Gastrocnemius medialis (tissue), 4 donors: ENCODE measurements at regions of chr17 and their contacts with region 1.

Region 1: GRCh38 chr17:68019675-68020408 is 15.7 kb upstream of the KPNA2 start:
- DNase-seq: peak; percentile 87 to 95
- ATAC-seq: peak; percentile 94 to 97
- H3K4me3 ChIP-seq: peak overlapping the region; percentile 66 to 79 (median 69)
- H3K27ac ChIP-seq: peak overlapping the region; percentile 85 to 92 (median 89)
- H3K4me1 ChIP-seq: peaks cover 0 to 6% of the 10 kb centered on the region in 2 donors
- H3K27me3 ChIP-seq: no peaks in the 10 kb centered on the region
- CTCF ChIP-seq: peak; percentile 33 to 72 (median 58)
- POLR2A ChIP-seq: peak in 1 of 2 donors; percentile 35

Region 2: DNA sequence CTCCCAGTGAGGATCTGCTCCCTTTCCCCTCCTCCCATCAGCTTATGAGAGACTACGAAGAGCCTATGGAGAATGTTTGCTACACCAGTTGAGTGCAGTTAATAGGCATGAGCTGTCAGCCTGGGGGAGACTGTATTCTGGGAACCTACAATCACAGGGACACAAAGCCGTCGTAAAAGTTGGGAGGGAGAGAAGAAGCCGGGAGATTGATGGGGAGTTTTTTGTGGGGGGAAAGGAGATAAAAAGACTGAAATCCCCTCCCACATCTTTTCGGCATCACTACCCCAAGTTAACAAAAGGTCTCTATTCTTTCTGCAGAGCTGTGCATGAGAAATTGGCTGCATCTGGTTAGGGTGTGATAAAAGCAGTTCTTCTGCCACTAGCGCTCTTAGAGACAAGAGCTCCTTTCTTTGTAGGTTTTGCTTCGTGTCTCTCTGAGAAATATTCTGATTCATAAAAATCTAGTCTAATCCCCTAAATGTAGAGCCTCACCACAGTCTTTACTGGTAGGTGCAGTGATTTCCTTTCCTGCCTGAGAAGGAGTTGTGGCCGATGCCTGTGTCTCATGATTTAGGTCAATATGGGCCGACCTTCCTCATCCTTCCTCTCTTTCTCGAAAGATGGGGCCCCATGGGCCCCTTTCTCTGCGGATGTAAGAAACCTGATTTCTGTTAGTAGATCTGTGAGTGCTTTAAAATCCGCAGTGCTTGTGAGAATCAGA is 117.2 kb before region 1 on chr17:
- in situ Hi-C with region 1: loop called in 1 of 4 experiments (anchors 25 kb)
- intact Hi-C with region 1: no loop called
- DNase-seq: no peak
- ATAC-seq: no peak
- H3K4me3 ChIP-seq: no peak overlapping the region
- H3K27ac ChIP-seq: no peak overlapping the region
- H3K4me1 ChIP-seq: no peaks in the 10 kb centered on the region
- H3K27me3 ChIP-seq: no peaks in the 10 kb centered on the region
- CTCF ChIP-seq: no peak
- POLR2A ChIP-seq: no peak

Region 3: GRCh38 chr17:67993596-67994361 is 26.1 kb before region 1 on chr17:
- in situ Hi-C with region 1: no loop called
- intact Hi-C with region 1: loop called (anchors 1 kb)
- DNase-seq: peak; percentile 66 to 80
- ATAC-seq: peak; percentile 79 to 82
- H3K4me3 ChIP-seq: peak overlapping the region; percentile 70 to 86 (median 83)
- H3K27ac ChIP-seq: peak overlapping the region; percentile 94 to 96 (median 94)
- H3K4me1 ChIP-seq: peaks cover 11 to 18% of the 10 kb centered on the region in 2 donors
- H3K27me3 ChIP-seq: no peaks in the 10 kb centered on the region
- CTCF ChIP-seq: no peak
- POLR2A ChIP-seq: peak; percentile 67 to 75